ENCODE measurements at regions of chr20 and their contacts with region 1.

Region 1: GRCh38 chr20:8777911-8778310 is 291.0 kb upstream of the PLCB4 start:
- DNase-seq: no peak
- H3K4me3 ChIP-seq: no peak overlapping the region
- H3K27ac ChIP-seq: no peak overlapping the region
- H3K4me1 ChIP-seq: no peaks in the 10 kb centered on the region
- H3K27me3 ChIP-seq: no peaks in the 10 kb centered on the region
- CTCF ChIP-seq: no peak
- POLR2A ChIP-seq: no peak

Region 2: DNA sequence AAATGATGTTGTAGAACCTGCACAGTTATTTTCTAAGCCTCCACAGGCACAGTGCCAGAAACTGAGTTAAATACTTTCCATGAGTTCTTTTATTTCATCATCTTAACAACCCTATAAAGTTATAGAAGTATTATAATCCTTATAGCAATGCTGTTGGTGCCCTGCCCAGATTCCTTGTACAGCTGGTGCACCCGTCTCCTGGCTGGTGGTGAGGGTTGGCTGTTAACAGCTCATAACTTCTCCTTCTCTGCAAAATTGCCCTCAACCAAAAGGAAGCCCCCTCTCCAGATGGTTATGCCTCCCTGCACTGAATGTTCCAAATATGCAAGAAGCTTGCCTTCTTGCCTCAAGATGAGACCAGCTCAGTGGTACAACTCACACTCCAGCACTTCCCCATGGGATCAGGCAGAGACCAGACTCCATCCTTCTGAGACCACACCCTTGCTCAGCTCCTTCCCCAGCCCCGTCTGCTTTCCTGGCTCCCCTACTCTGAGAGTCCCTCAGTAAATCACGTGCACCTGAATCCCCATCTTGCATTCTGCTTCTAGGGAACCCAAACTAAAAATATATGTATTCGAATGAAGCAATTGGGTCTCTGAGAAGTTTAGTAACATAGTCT is 13.5 kb before region 1 on chr20:
- intact Hi-C with region 1: no loop called
- DNase-seq: no peak
- H3K4me3 ChIP-seq: no peak overlapping the region
- H3K27ac ChIP-seq: no peak overlapping the region
- H3K4me1 ChIP-seq: no peaks in the 10 kb centered on the region
- H3K27me3 ChIP-seq: no peaks in the 10 kb centered on the region
- CTCF ChIP-seq: no peak
- POLR2A ChIP-seq: no peak

Region 3: DNA sequence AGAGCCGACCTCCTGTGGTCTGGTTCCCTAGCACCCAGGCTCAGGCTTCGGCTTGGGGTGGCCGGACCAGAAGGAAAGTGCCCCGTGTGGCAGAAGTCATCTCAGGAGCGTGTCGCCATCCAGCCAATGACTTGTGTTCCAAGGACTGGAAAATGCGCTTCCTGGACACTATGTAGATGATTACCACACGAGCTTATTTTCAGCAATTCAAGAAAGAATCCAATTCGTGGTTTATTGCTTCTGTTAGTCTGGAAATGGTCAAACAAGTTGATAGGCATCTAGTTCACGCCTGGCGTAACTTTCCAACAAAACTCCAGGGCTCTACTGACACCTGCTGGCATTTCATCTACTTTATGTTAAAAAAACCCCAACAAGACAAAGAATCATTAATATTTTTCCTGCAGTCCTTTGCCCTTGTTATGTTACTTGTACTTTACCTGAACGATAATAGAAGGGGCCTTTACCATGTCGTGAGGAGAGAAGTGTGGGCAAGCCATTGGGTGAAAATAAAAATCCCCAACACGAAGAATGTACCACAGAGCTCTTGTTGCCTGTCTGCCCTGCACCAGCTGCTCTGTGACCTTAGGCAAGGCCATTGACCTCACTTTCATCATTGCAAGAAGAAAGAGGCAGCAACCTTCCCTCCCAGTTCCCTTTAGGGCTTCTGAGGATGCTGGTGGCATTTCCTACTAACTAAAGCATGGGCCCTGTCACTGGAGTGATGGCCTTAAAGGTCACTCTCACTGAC is 581.8 kb after region 1 on chr20:
- intact Hi-C with region 1: loop called (anchors 10 kb)
- DNase-seq: no peak
- H3K4me3 ChIP-seq: no peak overlapping the region
- H3K27ac ChIP-seq: no peak overlapping the region
- H3K4me1 ChIP-seq: no peaks in the 10 kb centered on the region
- H3K27me3 ChIP-seq: no peaks in the 10 kb centered on the region
- CTCF ChIP-seq: peak in 2 of 3 donors; percentile 51 to 67
- POLR2A ChIP-seq: no peak

Measured in breast epithelium (tissue), 4 donors.